Psoas muscle (tissue), 8 donors: ENCODE measurements at regions of chr1 and their contacts with region 1.

Region 1: GRCh38 chr1:58848818-58849411 is 65.1 kb upstream of the JUN start:
- DNase-seq: peak; percentile 82 to 83
- ATAC-seq: peak; percentile 52 to 93 (median 83)
- H3K4me3 ChIP-seq: no peak overlapping the region
- H3K27ac ChIP-seq: peak overlapping the region; percentile 61
- H3K4me1 ChIP-seq: peaks cover 5% of the 10 kb centered on the region
- H3K27me3 ChIP-seq: no peaks in the 10 kb centered on the region
- CTCF ChIP-seq: no peak

Region 2: DNA sequence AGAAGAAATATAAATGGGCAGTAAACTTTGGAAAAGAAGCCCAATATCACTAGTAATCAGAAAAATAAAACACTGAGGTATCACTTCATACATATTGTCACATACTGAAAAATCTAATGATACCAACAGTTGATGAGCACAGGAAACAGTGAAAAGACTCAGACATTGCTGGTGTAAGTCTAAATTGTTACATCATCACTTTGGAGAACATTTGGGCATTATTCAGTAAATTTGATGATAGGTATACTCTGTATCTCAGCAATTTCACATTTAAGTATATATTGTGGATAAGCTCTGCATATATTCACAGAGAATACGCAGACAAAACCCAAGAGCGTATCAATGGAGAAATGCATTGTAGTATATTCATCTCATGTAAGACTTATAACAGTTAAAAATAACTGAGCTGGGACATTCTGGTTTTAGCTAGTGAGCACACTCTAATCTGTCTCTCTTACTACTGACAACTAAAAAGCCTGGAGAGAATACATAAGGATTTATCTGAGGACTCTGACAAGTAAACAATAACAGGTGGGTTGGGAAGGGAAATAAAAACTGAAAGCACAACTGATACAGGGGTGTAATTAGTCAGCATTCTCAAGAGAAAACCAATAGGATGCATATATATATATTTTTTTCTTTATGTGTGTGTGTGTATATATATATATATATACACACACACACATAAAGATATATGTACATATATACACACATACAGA is 147.6 kb after region 1 on chr1:
- intact Hi-C with region 1: loop called in 1 of 2 experiments (anchors 1 kb)
- DNase-seq: no peak
- ATAC-seq: peak; percentile 53 to 90 (median 68)
- H3K4me3 ChIP-seq: no peak overlapping the region
- H3K27ac ChIP-seq: no peak overlapping the region
- H3K4me1 ChIP-seq: no peaks in the 10 kb centered on the region
- H3K27me3 ChIP-seq: no peaks in the 10 kb centered on the region
- CTCF ChIP-seq: no peak